ENCODE measurements at regions of chr19 and their contacts with region 1.

Region 1: GRCh38 chr19:29771708-29772414 is 39.9 kb upstream of the CCNE1 start:
- DNase-seq: peak; percentile 76
- ATAC-seq: peak; percentile 91
- H3K4me3 Mint-ChIP-seq: no peak overlapping the region
- H3K27ac Mint-ChIP-seq: no peak overlapping the region
- H3K4me1 Mint-ChIP-seq: peaks cover 15% of the 10 kb centered on the region
- H3K27me3 Mint-ChIP-seq: no peaks in the 10 kb centered on the region; the same call in 1 of the 2 replicates
- CTCF ChIP-seq: peak; percentile 33; the same call in 1 of the 2 replicates

Region 2: DNA sequence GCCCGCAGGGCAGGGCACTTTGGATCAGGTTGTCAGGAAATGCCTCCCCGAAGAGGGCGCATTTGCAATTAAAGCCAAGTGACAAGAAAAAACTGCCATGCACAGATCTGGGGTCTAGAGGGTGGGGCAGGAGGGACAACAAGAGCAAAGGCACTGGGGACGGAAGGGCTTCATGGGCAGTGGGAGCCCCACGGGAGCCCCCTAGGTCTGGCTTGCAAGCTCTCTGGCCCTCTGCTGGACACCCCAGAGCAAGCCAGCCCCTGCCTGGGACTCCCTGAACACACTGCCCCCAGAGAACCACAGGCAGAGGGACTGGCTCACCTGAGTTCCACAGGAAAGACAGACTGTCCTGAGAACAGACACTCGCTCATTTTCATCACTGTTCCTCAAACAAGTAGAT is 26.6 kb before region 1 on chr19:
- CTCF ChIA-PET with region 1: interaction called, 11 read pairs
- POLR2A ChIA-PET with region 1: no interaction called
- DNase-seq: peak; percentile 69
- ATAC-seq: peak; percentile 98
- H3K4me3 Mint-ChIP-seq: no peak overlapping the region
- H3K27ac Mint-ChIP-seq: no peak overlapping the region
- H3K4me1 Mint-ChIP-seq: no peaks in the 10 kb centered on the region
- H3K27me3 Mint-ChIP-seq: no peaks in the 10 kb centered on the region; the same call in 1 of the 2 replicates
- CTCF ChIP-seq: no peak

Region 3: DNA sequence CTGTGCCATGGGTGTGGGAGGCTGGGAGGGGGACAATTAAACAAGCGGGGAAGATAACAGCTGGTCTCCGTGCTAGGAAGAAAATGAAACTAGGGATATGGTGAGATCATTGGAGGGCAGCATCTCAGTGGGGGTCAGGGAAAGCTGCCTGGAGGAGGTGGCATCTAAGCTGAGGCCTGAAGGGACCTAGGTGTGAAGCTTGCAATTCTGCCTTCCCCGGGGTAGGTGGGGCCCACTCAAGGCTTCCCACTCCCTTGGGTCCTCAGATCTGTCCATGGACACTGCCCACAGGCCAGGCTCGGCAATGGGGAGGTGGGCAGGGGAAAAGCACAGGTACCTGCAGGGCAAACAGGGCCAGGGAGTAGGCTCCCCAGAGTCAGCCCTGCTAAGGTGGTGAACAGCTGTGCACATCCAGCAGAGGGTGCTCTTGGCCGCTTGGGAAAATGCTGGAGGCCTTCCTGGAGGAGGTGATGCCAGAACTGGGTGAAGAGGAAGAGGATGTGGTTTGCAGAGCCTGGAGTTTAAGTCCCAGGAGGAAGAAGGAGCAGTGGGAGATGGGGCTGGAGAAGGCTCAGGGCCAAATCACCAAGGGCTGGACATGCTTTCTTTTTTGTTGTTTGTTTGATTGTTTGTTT is 14.2 kb after region 1 on chr19:
- CTCF ChIA-PET with region 1: interaction called, 17 read pairs
- POLR2A ChIA-PET with region 1: no interaction called
- DNase-seq: peak; percentile 65
- ATAC-seq: peak; percentile 89
- H3K4me3 Mint-ChIP-seq: no peak overlapping the region
- H3K27ac Mint-ChIP-seq: no peak overlapping the region
- H3K4me1 Mint-ChIP-seq: no peaks in the 10 kb centered on the region
- H3K27me3 Mint-ChIP-seq: no peaks in the 10 kb centered on the region
- CTCF ChIP-seq: no peak

Region 4: DNA sequence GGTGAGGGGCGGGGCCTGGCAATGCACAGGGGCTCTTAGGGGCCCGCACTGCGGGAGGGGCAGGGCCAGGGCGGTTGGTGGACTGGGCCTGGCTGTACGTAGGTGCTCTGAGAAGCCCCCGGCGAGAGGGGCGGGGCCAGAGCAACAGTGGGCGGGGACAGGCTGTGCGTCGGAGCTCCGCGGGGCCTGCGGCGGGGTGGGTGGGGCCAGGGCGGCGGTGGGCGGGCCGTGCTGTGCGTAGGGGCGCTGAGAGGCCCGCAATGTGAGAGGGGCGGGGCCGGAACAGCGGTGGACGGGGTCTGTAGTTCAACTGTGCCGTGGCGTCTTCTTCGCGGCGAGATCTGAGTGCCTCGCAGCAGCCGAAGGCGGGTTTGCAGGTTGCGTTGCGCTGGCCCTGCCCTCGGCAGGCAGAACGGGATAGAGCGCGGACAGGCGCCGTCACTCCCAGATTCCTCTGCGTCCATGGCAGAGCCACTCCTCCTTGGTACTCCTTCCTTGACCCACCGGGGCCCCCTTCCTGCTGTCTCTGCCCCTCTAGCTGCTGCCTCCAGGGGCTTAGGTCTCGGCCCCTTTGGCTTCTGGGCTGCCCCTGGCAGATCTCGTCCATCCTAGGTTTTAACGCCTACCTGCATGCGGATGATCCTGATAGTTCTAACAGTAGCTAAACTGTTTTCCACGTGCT is 73.2 kb after region 1 on chr19:
- CTCF ChIA-PET with region 1: interaction called, 12 read pairs
- POLR2A ChIA-PET with region 1: no interaction called
- DNase-seq: peak; percentile 93
- ATAC-seq: peak; percentile 83
- H3K4me3 Mint-ChIP-seq: peak overlapping the region; percentile 94
- H3K27ac Mint-ChIP-seq: peak overlapping the region; percentile 93
- H3K4me1 Mint-ChIP-seq: peaks cover 23% of the 10 kb centered on the region
- H3K27me3 Mint-ChIP-seq: peaks cover 16% of the 10 kb centered on the region
- CTCF ChIP-seq: no peak

Region 5: GRCh38 chr19:29967623-29968022 is 195.8 kb after region 1 on chr19:
- CTCF ChIA-PET with region 1: no interaction called
- POLR2A ChIA-PET with region 1: no interaction called
- DNase-seq: no peak
- ATAC-seq: no peak
- H3K4me3 Mint-ChIP-seq: no peak overlapping the region
- H3K27ac Mint-ChIP-seq: 0 out of 2 replicates have a peak overlapping the region, but pooled peaks have one; percentile 6
- H3K4me1 Mint-ChIP-seq: peaks cover 42% of the 10 kb centered on the region
- H3K27me3 Mint-ChIP-seq: no peaks in the 10 kb centered on the region
- CTCF ChIP-seq: no peak